Lower leg skin (tissue), 4 donors: ENCODE measurements at regions of chr22 and their contacts with region 1.

Region 1: GRCh38 chr22:32474635-32475467 is at the start of gene FBXO7:
- DNase-seq: peak; percentile 86 to 98
- H3K4me3 ChIP-seq: peak within 1 kb of the TSS; percentile 90
- CTCF ChIP-seq: peak in 1 of 3 donors; percentile 13
- POLR2A ChIP-seq: peak in 1 of 2 donors; percentile 14
- total RNA-seq, gene FBXO7: 61.6 to 89.4 (median 80.6) TPM

Region 2: DNA sequence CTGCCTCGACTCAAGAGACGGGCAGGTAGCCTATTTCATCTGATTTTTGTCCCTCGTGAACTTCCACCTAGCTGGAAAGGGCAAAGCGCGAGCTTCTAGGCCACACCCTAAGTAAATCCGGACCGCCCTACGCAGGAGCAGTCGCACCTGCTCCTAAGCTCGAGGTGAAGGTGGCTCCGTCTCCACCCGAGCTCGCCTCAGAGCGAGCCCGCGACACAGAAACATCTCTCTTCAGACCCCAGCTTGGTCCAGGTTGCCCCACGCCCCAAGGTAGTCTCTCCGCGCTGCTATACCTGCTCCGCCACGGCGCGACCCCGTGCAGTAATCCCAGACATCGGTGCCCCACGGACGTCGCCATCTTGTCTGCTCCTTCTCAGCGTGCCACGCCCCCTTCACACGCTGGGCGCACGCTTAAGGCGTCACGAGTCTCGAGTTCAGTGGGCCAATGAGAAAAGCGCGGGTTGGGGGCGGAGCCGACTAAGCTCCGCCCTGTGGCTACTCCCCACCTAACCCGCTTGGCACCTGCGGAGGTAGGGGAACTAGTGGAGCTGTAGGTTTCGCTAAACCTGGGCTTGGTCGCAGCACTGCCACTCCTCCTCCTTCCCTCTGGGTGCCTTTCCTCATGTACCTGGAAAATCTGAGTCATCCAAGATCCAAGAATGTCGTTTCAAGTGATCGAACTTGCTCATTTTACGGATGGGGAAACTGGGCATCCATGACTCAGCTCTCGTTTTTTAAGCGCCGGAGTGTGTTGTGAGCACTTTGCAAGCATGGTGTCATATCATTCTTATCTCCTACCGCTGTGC is 812.8 kb before region 1 on chr22 and contains the start of gene PISD:
- intact Hi-C with region 1: loop called (anchors 10 kb)
- DNase-seq: peak; percentile 96 to 99
- H3K4me3 ChIP-seq: peak within 1 kb of the TSS; percentile 65
- CTCF ChIP-seq: no peak
- POLR2A ChIP-seq: no peak
- total RNA-seq, gene PISD: 32.0 to 62.5 (median 45.5) TPM